Right ventricle myocardium inferior (tissue), 1 donor: ENCODE measurements at regions of chr16 and their contacts with region 1.

Region 1: GRCh38 chr16:85963753-85964285 is 64.9 kb downstream of the IRF8 start:
- DNase-seq: peak; percentile 82
- ATAC-seq: peak; percentile 93

Region 2: DNA sequence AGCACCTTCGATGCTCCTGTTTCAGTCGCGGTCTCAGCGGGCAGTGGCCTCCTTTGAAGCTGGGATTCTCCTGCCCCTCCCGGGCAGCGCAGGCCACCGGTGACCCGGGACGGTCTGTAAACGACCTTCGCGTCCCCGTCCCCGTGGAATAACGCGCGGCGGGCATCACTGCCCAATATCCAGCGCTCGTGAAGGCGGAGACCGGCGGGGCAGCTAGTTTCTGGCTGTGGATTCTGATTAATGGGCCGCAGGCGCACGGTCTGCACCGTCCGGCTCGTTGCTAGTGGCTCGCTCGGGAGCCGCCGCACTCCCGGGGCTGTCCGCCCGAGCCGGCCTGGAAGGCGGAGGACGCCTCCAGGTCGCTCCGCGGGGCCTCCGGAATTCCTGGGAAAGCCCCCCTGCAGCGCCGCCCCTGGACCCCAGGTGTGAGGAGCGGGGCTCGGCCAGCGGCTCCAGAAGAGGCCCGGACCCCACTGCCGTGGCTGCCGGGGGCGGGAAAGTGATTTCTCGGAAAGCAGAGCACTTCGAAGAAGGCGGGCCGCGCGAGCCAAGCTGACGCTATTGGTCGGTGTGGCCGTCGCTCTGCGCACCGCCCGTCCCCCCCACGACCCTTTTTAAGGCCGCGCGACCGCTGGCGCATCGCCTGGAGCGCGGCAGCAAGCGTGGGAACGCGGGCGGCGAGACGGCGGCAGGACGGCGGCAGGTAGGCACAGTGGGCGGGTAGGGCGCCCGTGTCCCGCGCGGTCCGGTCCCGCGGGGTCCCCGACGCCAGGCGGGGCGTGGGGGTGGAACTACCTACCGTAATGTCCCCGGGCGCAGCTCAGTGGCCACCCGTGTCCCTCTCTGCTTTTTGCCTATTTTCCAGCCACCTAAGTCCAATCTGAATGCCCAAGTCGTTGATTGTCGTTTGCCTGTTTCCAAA is 65.0 kb before region 1 on chr16 and contains the start of gene IRF8:
- intact Hi-C with region 1: loop called (anchors 5 kb)
- DNase-seq: peak; percentile 88
- ATAC-seq: peak; percentile 79
- total RNA-seq, gene IRF8: 3.3 TPM

Region 3: DNA sequence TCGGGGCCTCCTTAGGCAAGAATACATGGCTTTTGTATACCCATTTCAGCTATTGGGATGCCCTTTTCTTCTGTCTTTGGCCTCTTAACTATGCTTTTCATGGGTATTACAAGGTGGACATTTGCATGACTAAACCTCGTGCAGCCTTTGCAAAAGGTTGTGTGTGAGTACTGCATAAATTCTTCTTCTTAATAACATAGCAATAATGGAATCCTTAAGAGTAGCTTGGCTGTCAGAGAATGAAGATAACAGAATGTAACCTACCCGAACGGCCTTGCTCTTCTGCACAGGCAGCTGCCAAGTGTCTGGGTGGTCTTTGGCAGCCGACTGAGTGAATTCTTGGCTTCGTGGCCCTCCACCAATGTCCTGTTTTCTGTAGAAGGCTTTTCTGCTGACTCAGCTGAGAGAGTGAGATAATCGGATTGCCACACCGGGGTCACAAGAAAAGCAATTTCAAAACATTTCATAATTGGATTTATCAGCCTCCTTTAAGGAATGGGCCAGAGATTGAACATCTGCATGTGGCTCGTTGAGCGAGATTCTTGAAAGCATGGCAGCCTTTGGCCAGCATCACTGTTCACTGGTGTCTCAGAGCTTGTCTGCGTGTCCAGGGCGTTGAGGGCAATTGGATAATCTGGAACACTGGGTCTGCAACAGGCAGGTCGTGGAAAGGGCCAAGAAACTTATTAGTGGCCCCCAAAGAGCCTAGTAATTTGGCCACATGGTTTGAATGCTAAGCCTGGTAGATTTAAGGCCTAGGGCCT is 51.4 kb before region 1 on chr16:
- intact Hi-C with region 1: no loop called
- DNase-seq: no peak
- ATAC-seq: no peak